GM12878 (cell line): ENCODE measurements at regions of chr5 and their contacts with region 1.

Region 1: DNA sequence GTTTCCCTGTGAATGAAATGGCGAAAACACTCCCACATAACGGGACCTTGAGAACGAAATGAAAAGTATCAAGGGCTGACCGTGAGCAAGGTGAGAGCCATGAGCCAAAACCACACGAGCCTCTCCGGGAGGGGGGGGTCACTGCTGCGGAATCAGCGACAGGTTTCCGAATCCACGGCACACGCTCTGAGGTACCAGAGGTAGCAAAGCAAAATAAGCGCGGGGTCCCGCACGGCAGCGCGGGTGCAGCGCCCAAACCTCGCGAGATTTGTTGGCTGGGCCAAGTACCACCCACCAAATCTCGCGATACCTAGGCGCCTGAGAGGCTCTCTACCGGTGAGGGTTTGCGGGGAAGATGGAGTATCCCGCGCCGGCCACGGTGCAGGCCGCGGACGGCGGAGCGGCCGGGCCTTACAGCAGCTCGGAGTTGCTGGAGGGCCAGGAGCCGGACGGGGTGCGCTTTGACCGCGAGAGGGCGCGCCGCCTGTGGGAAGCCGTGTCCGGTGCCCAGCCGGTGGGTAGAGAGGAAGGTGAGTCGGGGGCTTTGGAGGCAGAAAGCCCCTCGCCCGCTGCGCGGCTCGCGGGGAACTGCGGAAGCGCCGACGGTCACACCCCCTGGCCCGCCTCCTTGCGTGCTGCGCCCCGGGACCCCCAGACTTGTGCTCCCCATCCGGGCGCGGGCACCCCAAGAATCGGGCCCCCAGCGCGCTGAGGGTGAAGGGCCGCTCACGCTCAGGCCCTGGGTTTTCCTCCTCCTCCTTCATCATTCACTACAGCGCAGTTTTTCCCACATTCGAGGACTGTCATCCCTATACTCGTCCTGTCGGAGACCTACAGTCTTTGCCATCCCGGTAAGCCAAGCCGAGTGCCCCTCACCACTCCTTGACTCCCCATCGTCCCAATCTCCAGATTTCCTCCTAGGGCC is at the start of gene ZNF346:
- DNase-seq: peak; percentile 65
- ATAC-seq: peak; percentile 94
- H3K4me3 ChIP-seq: peak within 1 kb of the TSS; percentile 87
- H3K27ac ChIP-seq: peak within 1 kb of the TSS; percentile 80
- H3K4me1 ChIP-seq: peaks cover 6% of the 10 kb centered on the region
- H3K27me3 ChIP-seq: no peaks in the 10 kb centered on the region
- CTCF ChIP-seq: peak; percentile 31 to 50 (median 40); a peak in 3 of 6 replicates
- EP300 ChIP-seq: no peak
- POLR2A ChIP-seq: peak; percentile 94
- RAD21 ChIP-seq: no peak
- polyA plus RNA-seq, gene ZNF346: 6.5 to 7.2 TPM

Region 2: DNA sequence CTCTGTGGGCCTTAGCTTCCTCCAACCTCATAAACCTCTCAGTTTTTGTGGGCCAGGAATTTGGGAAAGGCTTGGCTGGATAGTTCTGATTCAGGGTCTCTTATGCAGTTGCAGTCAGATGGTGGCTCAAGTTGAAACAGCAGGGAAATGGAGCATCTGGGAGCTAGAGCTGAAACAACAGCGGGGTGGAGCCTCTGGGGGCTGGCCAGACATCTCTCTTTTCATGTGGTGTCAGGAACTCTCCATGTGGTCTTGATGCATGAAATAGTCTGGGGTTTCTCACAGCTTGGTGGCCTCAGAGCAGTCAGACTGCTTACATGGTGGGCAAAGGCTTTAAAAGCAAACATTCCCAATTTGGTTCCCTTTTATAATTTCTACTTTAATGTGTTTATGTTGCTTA is 13.3 kb after region 1 on chr5:
- CTCF ChIA-PET with region 1: interaction called, 15 read pairs
- POLR2A ChIA-PET with region 1: interaction called, 3 read pairs
- RAD21 ChIA-PET with region 1: interaction called, 3 read pairs
- SMC1A ChIA-PET with region 1: interaction called, 5 read pairs
- in situ Hi-C with region 1: no loop called
- intact Hi-C with region 1: no loop called
- DNase-seq: no peak
- ATAC-seq: peak; percentile 74
- H3K4me3 ChIP-seq: no peak overlapping the region
- H3K27ac ChIP-seq: no peak overlapping the region; the same call in 1 of the 2 replicates
- H3K4me1 ChIP-seq: peaks cover 16% of the 10 kb centered on the region
- H3K27me3 ChIP-seq: no peaks in the 10 kb centered on the region
- CTCF ChIP-seq: 0 out of 6 replicates have a peak, but pooled peaks of 1 of the 3 experiments have one; percentile 2
- EP300 ChIP-seq: no peak
- POLR2A ChIP-seq: no peak
- RAD21 ChIP-seq: no peak